AG04449 (cell line): ENCODE measurements at regions of chr20 and their contacts with region 1.

Region 1: GRCh38 chr20:35410613-35411012 is 1.2 kb downstream of the UQCC1 start:
- DNase-seq: no peak
- H3K4me3 ChIP-seq: peak overlapping the region; percentile 88
- CTCF ChIP-seq: no peak

Region 2: DNA sequence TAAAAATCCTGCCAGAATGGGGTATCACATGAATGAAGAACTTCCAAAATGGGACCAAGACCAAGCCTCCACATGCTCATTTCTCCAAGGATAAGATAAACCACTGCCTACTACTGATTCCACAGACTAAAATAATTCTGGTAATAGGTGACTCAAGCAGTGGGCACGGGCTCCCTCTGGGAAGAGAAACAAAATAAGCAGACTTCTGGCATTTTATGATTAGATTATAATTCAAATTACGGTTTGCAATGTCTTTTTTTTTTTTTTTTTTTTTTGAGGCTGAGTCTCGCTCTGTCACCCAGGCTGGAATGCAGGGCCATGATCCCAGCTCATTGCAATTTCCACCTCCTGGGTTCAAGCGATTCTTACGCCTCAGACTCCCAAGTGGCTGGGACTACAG is 14.9 kb before region 1 on chr20:
- CTCF ChIA-PET with region 1: interaction called, 14 read pairs
- POLR2A ChIA-PET with region 1: interaction called, 6 read pairs
- DNase-seq: peak; percentile 64
- H3K4me3 ChIP-seq: no peak overlapping the region
- CTCF ChIP-seq: peak; percentile 38